Transverse colon (tissue), 4 donors: ENCODE measurements at regions of chr5 and their contacts with region 1.

Region 1: GRCh38 chr5:73215891-73216610 is 43.1 kb downstream of the TMEM174 start:
- DNase-seq: peak; percentile 83
- H3K4me3 ChIP-seq: peak overlapping the region in 3 of 4 donors; percentile 16 to 54 (median 31)
- H3K27ac ChIP-seq: peak overlapping the region in 1 of 4 donors; percentile 27
- H3K4me1 ChIP-seq: peaks cover 0 to 14% (median 10%) of the 10 kb centered on the region in 4 donors
- H3K27me3 ChIP-seq: peaks cover 85% of the 10 kb centered on the region
- CTCF ChIP-seq: peak; percentile 76 to 94 (median 89)
- EP300 ChIP-seq: no peak
- POLR2A ChIP-seq: no peak

Region 2: DNA sequence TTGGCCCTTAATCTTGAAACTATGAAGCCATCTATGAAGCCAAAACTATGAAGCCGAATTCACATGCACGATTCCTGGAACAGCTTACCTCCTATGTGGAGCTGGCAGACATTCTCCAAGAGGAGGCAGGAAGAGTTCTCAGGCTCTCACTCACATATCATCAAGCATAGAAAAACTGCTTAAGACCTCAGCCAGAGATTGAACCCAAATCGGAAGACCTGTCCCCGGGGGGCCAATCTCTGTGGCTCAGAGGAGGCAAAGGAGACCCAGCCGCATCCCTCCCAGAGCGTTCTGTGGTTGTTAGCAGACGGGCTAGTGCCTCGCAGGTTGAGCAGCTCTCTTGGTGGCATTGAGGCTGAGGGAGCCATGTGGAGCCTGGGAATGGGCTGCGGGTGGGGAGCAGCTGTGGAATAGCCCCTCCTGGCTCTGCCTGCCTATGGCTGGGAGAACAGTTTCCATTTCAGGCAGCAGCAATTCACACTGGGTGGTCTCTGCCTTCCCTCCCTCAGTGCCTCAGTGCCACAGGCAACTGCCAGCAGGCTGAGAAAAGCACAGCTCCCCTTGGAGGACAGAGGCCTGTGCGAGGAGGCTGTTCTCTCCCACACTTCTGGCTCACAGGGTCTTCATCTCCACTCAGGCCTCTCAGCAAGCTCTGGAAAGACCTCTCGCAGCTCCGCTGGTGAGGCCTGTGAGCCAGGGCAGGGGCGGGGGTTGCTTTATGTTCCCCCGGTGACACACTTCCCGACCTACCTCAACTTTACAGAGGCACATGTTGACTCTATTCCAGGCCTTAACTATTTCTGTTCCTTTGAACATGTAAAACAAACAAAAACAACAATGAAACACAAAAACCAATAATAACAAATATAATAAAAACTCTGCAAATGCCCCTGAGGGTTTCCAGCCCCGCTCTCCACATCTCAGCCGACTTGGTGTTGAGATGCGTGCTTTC is 60.5 kb before region 1 on chr5:
- in situ Hi-C with region 1: no loop called
- intact Hi-C with region 1: loop called (anchors 2 kb)
- DNase-seq: no peak
- H3K4me3 ChIP-seq: no peak overlapping the region
- H3K27ac ChIP-seq: no peak overlapping the region
- H3K4me1 ChIP-seq: peaks cover 0 to 9% (median 2%) of the 10 kb centered on the region in 4 donors
- H3K27me3 ChIP-seq: no peaks in the 10 kb centered on the region
- CTCF ChIP-seq: no peak
- EP300 ChIP-seq: no peak
- POLR2A ChIP-seq: no peak

Region 3: GRCh38 chr5:73454351-73455036 is 238.4 kb after region 1 on chr5:
- in situ Hi-C with region 1: loop called in 3 of 4 experiments (anchors 10 to 25 kb)
- intact Hi-C with region 1: loop called (anchors 5 kb)
- DNase-seq: peak; percentile 59
- H3K4me3 ChIP-seq: no peak overlapping the region
- H3K27ac ChIP-seq: no peak overlapping the region
- H3K4me1 ChIP-seq: peaks cover 0 to 10% (median 8%) of the 10 kb centered on the region in 4 donors
- H3K27me3 ChIP-seq: peaks cover 94% of the 10 kb centered on the region
- CTCF ChIP-seq: peak; percentile 58 to 80 (median 72)
- EP300 ChIP-seq: no peak
- POLR2A ChIP-seq: no peak